Panc1 (cell line): ENCODE measurements at regions of chr1 and their contacts with region 1.

Region 1: DNA sequence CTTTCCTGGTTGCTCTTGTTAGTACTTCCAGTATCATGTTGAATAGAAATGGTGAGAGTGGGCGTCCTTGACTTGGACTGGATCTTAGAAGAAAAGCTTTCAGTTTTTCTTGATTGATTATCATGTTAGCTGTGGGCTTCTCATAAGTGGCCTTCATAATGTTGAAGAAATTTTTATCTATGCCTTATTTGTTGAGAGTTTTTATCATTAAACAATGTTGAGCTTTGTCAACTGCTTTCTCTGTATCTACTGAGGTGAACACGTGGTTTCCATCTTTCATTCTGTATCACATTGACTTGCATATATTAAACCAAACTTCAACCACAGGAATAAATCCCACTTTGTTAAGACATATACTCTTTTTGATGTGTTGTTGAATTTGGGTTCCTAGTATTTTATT is 29.4 kb downstream of the PRKAB2 start:
- DNase-seq: no peak
- ATAC-seq: no peak
- H3K4me3 ChIP-seq: no peak overlapping the region
- H3K27ac ChIP-seq: no peak overlapping the region
- H3K4me1 ChIP-seq: no peaks in the 10 kb centered on the region
- H3K27me3 ChIP-seq: peaks cover 1% of the 10 kb centered on the region; the same call in 1 of the 2 replicates
- CTCF ChIP-seq: no peak

Region 2: DNA sequence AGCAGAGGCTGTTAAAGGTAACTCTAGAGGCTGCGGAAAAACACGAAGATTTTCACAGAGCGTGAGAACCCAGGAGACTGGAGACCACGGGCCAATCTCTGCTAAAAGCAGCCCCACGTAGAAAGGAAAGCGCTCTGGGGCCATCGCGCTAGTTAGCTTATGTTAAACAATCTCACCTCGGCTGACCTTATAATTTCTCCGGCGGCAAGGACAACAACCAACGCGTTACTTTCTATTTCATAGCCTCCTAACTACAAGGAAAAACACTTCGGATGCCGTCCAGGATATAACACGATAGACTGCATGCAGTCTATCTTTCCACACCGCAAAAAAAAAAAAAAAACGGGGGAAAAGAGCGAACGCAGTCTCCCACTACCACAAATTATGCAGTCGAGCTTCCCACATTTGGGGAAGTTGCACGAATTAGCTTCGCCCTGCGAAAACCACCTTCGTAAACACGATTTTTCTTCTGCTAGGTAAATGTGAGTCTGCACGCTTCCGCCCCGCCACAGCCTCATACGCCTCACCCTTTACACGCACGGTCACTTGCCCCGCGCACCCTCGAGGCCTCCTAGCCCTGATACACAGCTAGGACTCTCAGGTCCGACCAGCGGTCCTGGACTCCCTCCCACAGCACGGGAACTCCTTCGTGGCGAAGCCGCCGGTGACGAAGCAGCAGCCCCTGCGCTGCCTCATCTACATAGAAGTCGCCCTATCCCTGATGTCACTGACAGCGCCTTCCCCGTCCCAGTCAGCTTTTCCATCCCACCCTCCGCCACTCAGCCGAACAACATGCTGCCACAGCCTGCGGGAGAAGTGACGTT is 58.4 kb before region 1 on chr1:
- CTCF ChIA-PET with region 1: no interaction called
- POLR2A ChIA-PET with region 1: interaction called, 10 read pairs
- in situ Hi-C with region 1: no loop called
- intact Hi-C with region 1: no loop called
- DNase-seq: peak; percentile 89
- ATAC-seq: peak; percentile 94
- H3K4me3 ChIP-seq: peak overlapping the region; percentile 73 to 96
- H3K27ac ChIP-seq: peak overlapping the region; percentile 92
- H3K4me1 ChIP-seq: no peaks in the 10 kb centered on the region
- H3K27me3 ChIP-seq: peaks cover 6% of the 10 kb centered on the region; the same call in 1 of the 2 replicates
- CTCF ChIP-seq: no peak

Region 3: DNA sequence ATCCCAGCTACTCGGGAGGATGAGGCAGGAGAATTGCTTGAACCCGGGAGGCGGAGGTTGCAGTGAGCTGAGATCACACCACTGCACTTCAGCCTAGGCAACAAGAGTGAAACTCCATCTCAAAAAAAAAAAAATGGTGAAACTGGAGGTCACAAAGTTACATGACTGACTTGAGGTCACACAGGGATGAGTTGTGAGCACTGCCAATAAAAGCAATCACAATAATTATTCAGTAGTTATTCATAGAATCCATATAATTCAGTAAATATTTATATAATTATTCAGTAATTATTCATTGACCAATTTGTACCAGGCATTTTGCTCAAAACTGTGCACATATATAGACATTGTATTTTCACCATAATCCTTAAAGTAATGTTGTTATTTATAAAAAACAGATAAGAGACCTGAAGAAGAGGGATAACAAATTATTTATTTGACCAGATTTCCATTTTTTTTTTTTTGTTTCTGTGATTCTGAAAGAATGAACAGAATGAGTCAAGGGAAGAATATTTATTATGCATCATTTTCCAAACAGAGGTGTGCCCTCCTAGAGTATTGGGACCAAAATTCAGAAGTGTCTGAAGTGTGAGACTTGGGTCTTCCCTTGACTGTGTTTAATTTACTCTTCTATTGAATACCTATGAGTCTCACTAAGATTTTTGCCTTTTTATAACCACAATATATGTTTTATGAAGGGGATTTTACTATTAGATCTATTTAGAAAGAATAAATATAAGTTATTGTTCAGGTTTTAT is 13.6 kb before region 1 on chr1:
- CTCF ChIA-PET with region 1: no interaction called
- POLR2A ChIA-PET with region 1: no interaction called
- in situ Hi-C with region 1: no loop called
- intact Hi-C with region 1: no loop called
- DNase-seq: no peak
- ATAC-seq: no peak
- H3K4me3 ChIP-seq: no peak overlapping the region
- H3K27ac ChIP-seq: no peak overlapping the region
- H3K4me1 ChIP-seq: no peaks in the 10 kb centered on the region
- H3K27me3 ChIP-seq: peaks cover 5% of the 10 kb centered on the region; the same call in 1 of the 2 replicates
- CTCF ChIP-seq: no peak